ENCODE measurements at regions of chr5 and their contacts with region 1.

Region 1: GRCh38 chr5:81751009-81751835 is at the start of gene SSBP2:
- DNase-seq: peak; percentile 98
- H3K4me3 Mint-ChIP-seq: peak within 1 kb of the TSS; percentile 86
- H3K27ac Mint-ChIP-seq: peak within 1 kb of the TSS; percentile 74
- H3K4me1 Mint-ChIP-seq: peaks cover 22% of the 10 kb centered on the region
- H3K27me3 Mint-ChIP-seq: no peaks in the 10 kb centered on the region
- total RNA-seq, gene SSBP2: 13.0 to 14.2 TPM

Region 2: DNA sequence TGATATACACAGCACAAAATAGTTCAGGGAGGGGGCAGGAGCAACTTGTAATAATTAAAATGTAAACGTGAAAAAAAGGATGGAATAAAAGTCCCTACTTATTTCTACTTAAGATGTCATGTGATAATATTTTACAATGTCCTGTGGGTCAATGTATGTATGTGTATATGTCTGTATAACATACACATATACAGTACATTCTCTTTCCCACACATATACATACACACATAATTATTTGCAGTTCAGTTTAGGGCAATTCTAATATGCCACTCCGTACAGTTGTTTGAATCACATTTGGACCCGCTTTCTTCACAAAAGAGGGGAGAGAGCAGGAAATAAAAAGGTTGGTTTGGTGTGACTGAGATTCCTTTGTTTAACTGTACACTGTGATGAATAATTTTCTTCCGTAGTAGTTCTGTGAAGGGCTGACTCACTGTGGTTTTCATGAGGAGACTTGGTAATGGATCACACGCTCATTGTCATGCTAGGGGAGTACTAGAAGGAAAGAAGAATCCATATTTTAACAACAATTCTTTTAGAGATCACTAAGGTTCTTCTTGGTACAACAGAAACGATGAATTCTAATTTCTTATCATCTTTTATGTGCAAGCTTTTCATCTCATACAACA is 331.1 kb before region 1 on chr5:
- CTCF ChIA-PET with region 1: interaction called, 5 read pairs
- POLR2A ChIA-PET with region 1: no interaction called
- intact Hi-C with region 1: loop called (anchors 1 kb)
- DNase-seq: no peak
- H3K4me3 Mint-ChIP-seq: no peak overlapping the region
- H3K27ac Mint-ChIP-seq: peak overlapping the region; percentile 21
- H3K4me1 Mint-ChIP-seq: peaks cover 14% of the 10 kb centered on the region
- H3K27me3 Mint-ChIP-seq: no peaks in the 10 kb centered on the region

Region 3: GRCh38 chr5:81631124-81631523 is 120.1 kb before region 1 on chr5:
- CTCF ChIA-PET with region 1: no interaction called
- POLR2A ChIA-PET with region 1: no interaction called
- intact Hi-C with region 1: loop called (anchors 5 kb)
- DNase-seq: peak; percentile 63
- H3K4me3 Mint-ChIP-seq: no peak overlapping the region
- H3K27ac Mint-ChIP-seq: no peak overlapping the region
- H3K4me1 Mint-ChIP-seq: peaks cover 8% of the 10 kb centered on the region
- H3K27me3 Mint-ChIP-seq: no peaks in the 10 kb centered on the region

Region 4: GRCh38 chr5:81851481-81852178 is 100.4 kb after region 1 on chr5:
- CTCF ChIA-PET with region 1: interaction called, 22 read pairs
- POLR2A ChIA-PET with region 1: interaction called, 62 read pairs
- intact Hi-C with region 1: loop called (anchors 1 kb)
- DNase-seq: peak; percentile 93
- H3K4me3 Mint-ChIP-seq: peak overlapping the region; percentile 89
- H3K27ac Mint-ChIP-seq: peak overlapping the region; percentile 92
- H3K4me1 Mint-ChIP-seq: peaks cover 28% of the 10 kb centered on the region
- H3K27me3 Mint-ChIP-seq: no peaks in the 10 kb centered on the region

Region 5: GRCh38 chr5:82165740-82166530 is 414.7 kb after region 1 on chr5:
- CTCF ChIA-PET with region 1: interaction called, 5 read pairs
- POLR2A ChIA-PET with region 1: no interaction called
- intact Hi-C with region 1: loop called (anchors 10 kb)
- DNase-seq: peak; percentile 30
- H3K4me3 Mint-ChIP-seq: no peak overlapping the region
- H3K27ac Mint-ChIP-seq: no peak overlapping the region
- H3K4me1 Mint-ChIP-seq: peaks cover 6% of the 10 kb centered on the region
- H3K27me3 Mint-ChIP-seq: no peaks in the 10 kb centered on the region

Measured in activated CD4-positive, alpha-beta memory T cell treated with anti-CD3 and anti-CD28 coated beads for 36 hours (primary cell).